IMR-90 (cell line): ENCODE measurements at regions of chr4 and their contacts with region 1.

Region 1: GRCh38 chr4:5292101-5292500 is 240.8 kb downstream of the STK32B start:
- DNase-seq: no peak
- ATAC-seq: no peak
- H3K4me3 ChIP-seq: no peak overlapping the region
- H3K27ac ChIP-seq: no peak overlapping the region
- H3K4me1 ChIP-seq: no peaks in the 10 kb centered on the region
- H3K27me3 ChIP-seq: no peaks in the 10 kb centered on the region
- CTCF ChIP-seq: no peak
- POLR2A ChIP-seq: no peak
- RAD21 ChIP-seq: no peak

Region 2: DNA sequence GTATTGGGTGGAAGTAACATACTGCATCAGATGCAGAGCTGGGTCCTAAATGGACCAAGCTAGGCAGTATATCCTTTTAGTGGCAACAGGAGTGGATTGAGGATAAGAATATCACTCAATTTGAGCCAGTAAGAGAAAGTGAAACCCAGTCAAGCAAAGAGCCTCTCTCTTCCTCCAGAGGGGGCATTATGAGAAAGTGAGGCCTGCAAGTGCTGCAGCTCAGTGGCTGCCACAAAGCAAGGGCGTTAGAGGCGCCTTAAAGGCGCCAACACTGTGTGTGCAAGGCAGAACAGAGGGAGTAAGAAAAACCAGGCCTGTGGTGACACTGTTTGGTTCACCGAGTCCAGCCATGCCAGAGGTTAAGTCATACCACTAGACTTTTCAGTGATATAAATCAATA is 767.7 kb before region 1 on chr4:
- CTCF ChIA-PET with region 1: no interaction called
- POLR2A ChIA-PET with region 1: no interaction called
- dilution Hi-C with region 1: no loop called
- in situ Hi-C with region 1: no loop called
- intact Hi-C with region 1: no loop called
- DNase-seq: peak; percentile 11
- ATAC-seq: peak; percentile 24; the same call in 1 of the 2 replicates
- H3K4me3 ChIP-seq: no peak overlapping the region
- H3K27ac ChIP-seq: no peak overlapping the region
- H3K4me1 ChIP-seq: no peaks in the 10 kb centered on the region
- H3K27me3 ChIP-seq: no peaks in the 10 kb centered on the region
- CTCF ChIP-seq: no peak
- POLR2A ChIP-seq: no peak
- RAD21 ChIP-seq: no peak

Region 3: GRCh38 chr4:5340991-5341451 is 48.9 kb after region 1 on chr4:
- CTCF ChIA-PET with region 1: no interaction called
- POLR2A ChIA-PET with region 1: interaction called, 12 read pairs
- dilution Hi-C with region 1: no loop called
- in situ Hi-C with region 1: no loop called
- intact Hi-C with region 1: no loop called
- DNase-seq: no peak
- ATAC-seq: no peak
- H3K4me3 ChIP-seq: no peak overlapping the region
- H3K27ac ChIP-seq: no peak overlapping the region
- H3K4me1 ChIP-seq: no peaks in the 10 kb centered on the region
- H3K27me3 ChIP-seq: no peaks in the 10 kb centered on the region
- CTCF ChIP-seq: no peak
- POLR2A ChIP-seq: no peak
- RAD21 ChIP-seq: no peak